ENCODE measurements at regions of chr21 and their contacts with region 1.

Region 1: DNA sequence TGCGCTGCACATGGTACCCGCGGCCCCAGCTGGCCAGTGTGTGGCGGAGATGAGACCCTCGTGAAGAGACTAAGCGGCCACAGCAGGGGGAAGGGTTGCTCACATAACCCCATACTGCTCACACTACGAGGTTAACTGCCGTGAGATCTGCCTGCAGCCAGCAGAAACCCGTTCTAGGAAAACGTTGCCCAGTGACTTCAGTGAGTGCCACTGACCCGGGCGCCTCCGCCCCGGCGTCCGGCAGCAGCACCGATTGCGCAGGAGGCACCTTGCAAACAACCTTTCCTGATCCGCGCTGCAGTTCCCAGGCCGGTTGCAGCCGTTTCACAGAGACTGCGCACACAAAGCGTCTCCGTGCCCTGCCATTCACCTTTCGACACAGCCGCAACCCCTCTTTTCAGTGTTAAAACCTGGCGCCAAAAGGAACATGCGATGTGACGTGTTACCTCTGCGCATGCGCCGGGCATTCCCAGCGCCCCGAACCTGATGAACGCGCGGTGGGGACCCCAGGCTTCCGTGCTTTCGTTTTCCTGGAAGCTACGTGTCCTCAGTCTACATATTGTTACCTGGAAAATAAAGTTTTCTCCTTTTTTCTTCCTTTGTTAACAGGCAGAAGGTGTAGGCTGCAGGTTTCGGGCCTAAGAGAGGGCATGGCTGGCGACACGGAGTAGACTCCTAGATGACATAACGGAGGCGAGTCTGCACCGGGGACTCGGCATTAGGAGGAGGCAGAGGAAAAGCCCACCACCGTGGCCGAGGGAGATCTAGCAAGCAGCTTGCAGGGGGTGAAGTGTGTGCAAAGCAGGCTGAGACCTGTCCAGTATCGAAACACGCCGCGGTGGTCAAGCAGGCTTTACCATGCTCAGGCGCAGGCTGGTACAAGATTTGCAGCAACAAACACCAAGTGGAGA is 8.9 kb downstream of the VPS26C start:
- DNase-seq: peak; percentile 93
- ATAC-seq: peak; percentile 82
- H3K4me3 Mint-ChIP-seq: peak overlapping the region; percentile 80
- H3K27ac Mint-ChIP-seq: peak overlapping the region; percentile 93
- H3K4me1 Mint-ChIP-seq: peaks cover 55% of the 10 kb centered on the region
- H3K27me3 Mint-ChIP-seq: no peaks in the 10 kb centered on the region

Region 2: DNA sequence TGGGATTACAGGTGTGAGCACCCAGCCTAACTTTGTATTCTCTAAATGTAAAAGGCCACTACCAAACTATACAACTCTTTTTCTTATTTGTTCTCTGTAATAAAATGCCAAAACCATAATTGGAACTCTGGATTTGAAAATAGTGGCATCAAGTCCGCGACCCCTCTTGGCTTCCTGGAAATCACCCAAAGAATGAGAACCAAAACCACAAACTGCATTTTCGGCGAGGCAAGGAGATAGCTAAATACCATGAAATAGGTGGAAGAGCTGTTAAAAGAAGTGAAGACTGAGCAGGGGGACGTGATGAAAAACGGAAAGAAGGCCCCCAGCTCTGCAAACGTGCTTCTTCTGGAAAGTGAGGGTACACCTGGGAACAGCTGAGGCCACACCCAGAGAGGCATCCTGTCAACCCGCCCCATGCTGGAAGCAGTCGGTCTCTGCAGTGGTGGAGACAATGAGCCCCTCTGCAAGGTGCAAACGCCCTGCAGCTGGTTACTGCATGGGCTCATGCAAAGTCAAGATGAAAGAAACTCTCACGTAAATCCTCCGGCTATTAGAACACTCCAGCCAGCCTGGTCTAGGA is 13.6 kb before region 1 on chr21:
- CTCF ChIA-PET with region 1: interaction called, 61 read pairs
- DNase-seq: peak; percentile 76
- ATAC-seq: peak; percentile 85
- H3K4me3 Mint-ChIP-seq: peak overlapping the region; percentile 68
- H3K27ac Mint-ChIP-seq: peak overlapping the region; percentile 97
- H3K4me1 Mint-ChIP-seq: peaks cover 89% of the 10 kb centered on the region
- H3K27me3 Mint-ChIP-seq: no peaks in the 10 kb centered on the region

Region 3: DNA sequence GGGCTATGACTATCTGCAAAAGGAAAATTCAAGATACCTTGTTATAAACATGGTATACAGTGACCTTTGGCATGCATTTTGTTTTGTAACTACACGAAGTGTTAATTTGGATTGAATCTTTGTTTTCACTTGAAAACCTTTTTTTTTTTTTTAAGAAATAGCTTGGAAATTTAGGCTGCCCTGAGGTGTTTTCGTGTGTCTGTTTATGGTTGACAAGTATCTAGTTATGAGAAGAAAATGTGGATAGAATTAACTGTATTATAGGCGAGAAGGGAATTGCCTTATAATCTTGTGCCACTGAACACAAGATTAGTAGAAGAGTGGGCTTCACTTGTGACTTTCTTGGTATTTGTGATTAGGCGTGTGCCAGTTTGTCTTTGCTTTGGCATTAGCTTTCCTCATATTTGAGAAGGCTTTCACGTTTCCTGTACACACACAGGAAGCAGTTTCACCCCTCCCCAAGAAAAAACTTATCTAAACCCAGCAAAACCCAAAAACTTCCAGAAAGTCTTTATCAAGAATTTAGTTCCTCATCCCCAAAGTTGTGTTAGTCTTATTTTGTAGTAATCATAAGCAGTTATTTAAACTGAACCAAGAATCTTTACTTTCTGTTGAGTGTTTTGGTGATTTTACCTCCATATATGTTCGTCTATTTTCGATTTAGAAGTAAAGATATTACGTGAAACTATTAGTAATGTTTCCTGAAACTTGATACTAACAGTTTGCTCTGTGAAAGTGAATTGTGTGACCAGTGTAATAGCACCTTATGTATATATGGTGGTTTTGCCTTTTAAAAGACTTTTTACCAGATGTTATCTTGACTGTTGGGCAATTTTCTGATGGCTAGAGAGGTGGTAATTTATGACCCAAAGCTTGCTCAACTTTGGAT is 112.2 kb after region 1 on chr21:
- CTCF ChIA-PET with region 1: interaction called, 10 read pairs
- DNase-seq: no peak
- ATAC-seq: no peak
- H3K4me3 Mint-ChIP-seq: peak overlapping the region; percentile 88
- H3K27ac Mint-ChIP-seq: peak overlapping the region; percentile 89
- H3K4me1 Mint-ChIP-seq: peaks cover 59% of the 10 kb centered on the region
- H3K27me3 Mint-ChIP-seq: no peaks in the 10 kb centered on the region